ENCODE measurements at regions of chr10 and their contacts with region 1.

Region 1: DNA sequence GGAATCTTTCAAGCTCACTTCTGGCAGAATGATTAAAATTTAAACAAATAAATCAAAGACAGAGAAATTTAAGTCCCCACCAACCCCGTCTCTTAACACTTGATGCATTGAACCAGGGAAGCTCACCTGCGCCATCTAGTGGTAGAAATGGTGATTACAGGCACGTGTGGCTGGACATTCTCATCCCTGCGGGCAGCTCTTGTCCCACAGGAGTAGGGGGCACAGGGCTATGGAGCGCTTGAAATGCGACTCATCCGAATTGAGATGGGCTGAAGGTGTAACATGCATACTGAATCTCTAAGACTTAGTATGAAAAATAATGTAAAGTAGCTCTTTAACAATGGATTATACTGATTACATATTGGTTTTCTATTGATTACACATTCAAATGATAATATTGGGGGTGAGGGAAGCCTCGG is 24.8 kb upstream of the SLIT1 start:
- DNase-seq: peak; percentile 70
- H3K27ac ChIP-seq: no peak overlapping the region
- CTCF ChIP-seq: peak; percentile 96

Region 2: DNA sequence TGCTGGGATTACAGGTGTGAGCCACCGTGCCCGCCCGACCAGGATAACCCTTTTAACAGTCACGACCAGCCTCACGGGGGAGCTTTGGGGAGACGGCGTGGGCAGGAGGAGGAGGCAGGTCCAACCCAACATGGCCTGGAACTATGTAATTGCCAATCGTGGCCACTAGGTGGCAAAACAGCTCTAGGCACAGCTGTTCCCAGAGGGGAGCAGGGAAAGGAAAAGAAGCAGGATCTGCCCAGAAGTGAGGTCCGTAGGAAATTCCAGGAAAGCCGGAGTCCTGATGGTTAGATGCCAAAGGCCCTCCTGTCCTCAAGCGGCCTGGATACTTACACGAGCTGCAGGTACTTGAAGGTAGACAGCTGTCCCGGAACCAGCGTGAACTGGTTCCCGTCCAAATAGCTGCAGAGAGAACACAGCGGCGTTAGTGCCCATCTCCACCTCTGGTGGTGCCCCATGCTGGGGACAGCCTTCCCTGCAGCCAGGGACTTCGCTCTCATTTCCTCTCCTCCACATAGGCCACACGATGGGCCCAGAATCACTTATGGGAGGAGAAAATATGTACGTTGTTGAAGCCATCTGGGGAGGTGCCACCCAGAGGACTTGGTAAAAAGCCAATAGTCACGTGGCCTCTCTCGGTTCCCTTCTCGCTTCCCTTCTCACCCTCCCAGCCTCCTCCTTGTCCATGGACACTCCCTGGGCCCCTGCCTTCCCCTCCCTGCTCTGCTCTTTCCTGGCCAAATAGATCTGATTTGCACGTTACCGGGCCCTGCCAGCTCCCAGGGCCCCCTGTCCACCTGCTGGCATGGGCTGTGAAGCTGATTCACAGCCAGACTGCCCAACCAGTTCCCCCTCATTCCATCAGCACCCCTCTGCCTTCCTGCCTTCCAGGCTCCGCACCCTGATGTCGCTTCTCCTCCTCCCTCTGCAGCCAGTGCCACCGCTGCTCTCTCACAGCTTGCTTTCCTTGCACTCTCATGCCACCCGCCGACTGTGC is 172.9 kb before region 1 on chr10:
- CTCF ChIA-PET with region 1: interaction called, 36 read pairs
- POLR2A ChIA-PET with region 1: interaction called, 3 read pairs
- DNase-seq: peak; percentile 91
- H3K27ac ChIP-seq: peak overlapping the region; percentile 39; the same call in 1 of the 2 replicates
- CTCF ChIP-seq: peak; percentile 90

Region 3: GRCh38 chr10:97196223-97197029 is 14.1 kb before region 1 on chr10:
- CTCF ChIA-PET with region 1: interaction called, 31 read pairs
- POLR2A ChIA-PET with region 1: no interaction called
- DNase-seq: peak; percentile 68
- H3K27ac ChIP-seq: no peak overlapping the region
- CTCF ChIP-seq: peak; percentile 77

Region 4: GRCh38 chr10:97222326-97222961 is 11.9 kb after region 1 on chr10:
- CTCF ChIA-PET with region 1: interaction called, 17 read pairs
- POLR2A ChIA-PET with region 1: interaction called, 3 read pairs
- DNase-seq: no peak
- H3K27ac ChIP-seq: no peak overlapping the region
- CTCF ChIP-seq: no peak

Measured in RWPE1 (cell line).